Calu3 (cell line): ENCODE measurements at regions of chr2 and their contacts with region 1.

Region 1: DNA sequence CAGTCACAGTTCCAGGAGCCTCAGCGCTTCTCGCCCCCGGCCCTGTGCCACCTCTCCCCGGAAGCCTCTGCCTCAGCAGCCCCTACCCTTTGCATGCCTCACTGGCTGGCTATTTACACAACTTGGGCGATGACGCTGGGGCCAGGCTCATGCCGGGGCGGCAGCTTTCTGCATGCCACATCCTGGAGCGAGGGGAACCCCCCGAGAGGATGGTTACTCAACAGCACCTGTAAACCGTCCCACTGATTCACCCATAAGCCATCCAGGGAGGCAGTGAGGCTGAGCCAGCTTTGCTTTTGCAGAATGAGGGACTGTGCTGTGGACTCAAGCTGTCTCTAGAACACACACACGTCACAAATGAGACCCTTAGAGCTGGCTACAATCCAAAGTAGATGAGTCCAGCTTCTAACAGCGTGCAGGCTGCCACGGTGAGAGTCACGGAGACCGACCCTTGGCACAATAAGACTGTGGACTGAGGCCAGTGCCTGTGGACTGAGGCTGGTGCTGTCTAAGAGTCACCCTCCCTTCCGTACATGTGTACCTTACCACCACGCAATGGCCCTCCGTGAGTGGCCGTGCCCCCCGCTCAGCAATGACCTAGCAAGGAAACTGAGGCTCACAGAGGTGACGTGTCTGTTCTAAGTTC is 45.6 kb upstream of the ODC1 start:
- DNase-seq: peak; percentile 95
- H3K4me3 Mint-ChIP-seq: no peak overlapping the region
- H3K27ac Mint-ChIP-seq: peak overlapping the region; percentile 75
- H3K4me1 Mint-ChIP-seq: peaks cover 33% of the 10 kb centered on the region
- H3K27me3 Mint-ChIP-seq: peaks cover 18% of the 10 kb centered on the region
- CTCF ChIP-seq: no peak

Region 2: GRCh38 chr2:10400568-10400977 is 93.2 kb before region 1 on chr2:
- CTCF ChIA-PET with region 1: no interaction called
- intact Hi-C with region 1: no loop called
- DNase-seq: no peak
- H3K4me3 Mint-ChIP-seq: no peak overlapping the region
- H3K27ac Mint-ChIP-seq: no peak overlapping the region
- H3K4me1 Mint-ChIP-seq: peaks cover 34% of the 10 kb centered on the region
- H3K27me3 Mint-ChIP-seq: no peaks in the 10 kb centered on the region
- CTCF ChIP-seq: no peak

Region 3: GRCh38 chr2:10504994-10505820 is 11.4 kb after region 1 on chr2:
- CTCF ChIA-PET with region 1: interaction called, 10 read pairs
- intact Hi-C with region 1: no loop called
- DNase-seq: no peak
- H3K4me3 Mint-ChIP-seq: no peak overlapping the region
- H3K27ac Mint-ChIP-seq: no peak overlapping the region
- H3K4me1 Mint-ChIP-seq: no peaks in the 10 kb centered on the region
- H3K27me3 Mint-ChIP-seq: peaks cover 22% of the 10 kb centered on the region
- CTCF ChIP-seq: no peak

Region 4: DNA sequence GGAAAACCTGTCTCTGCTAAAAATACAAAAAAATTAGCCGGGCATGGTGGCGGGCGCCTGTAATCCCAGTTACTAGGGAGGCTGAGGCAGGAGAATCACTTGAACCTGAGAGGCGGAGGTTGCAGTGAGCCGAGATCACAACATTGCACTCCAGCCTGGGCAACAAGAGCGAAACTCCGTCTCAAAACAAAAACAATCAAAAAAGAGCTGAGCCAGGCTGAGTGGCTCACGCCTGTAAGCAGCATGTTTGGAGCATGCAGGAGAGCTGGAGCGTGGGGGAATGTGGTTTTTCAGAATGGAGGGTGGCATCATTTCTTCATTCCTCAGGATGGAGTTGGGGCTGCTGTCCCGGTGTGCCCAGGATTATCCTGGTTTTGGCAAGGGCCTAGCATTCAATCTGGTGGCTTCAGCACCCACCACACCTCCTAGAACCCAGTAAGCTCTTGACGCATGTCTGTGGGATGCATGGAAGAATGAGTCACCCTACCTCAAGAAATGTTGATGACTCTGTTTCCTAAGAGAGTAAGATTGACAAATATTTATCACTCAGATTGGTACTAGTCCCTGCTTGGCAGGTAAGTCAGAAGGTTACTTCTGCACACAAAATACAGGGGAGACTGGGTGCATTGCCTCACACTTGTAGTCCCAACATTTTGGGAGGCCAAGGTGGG is 44.6 kb after region 1 on chr2:
- CTCF ChIA-PET with region 1: no interaction called
- intact Hi-C with region 1: loop called (anchors 5 kb)
- DNase-seq: no peak
- H3K4me3 Mint-ChIP-seq: no peak overlapping the region
- H3K27ac Mint-ChIP-seq: no peak overlapping the region
- H3K4me1 Mint-ChIP-seq: peaks cover 22% of the 10 kb centered on the region
- H3K27me3 Mint-ChIP-seq: no peaks in the 10 kb centered on the region
- CTCF ChIP-seq: no peak